PC-9 (cell line): ENCODE measurements at regions of chr20 and their contacts with region 1.

Region 1: GRCh38 chr20:53365539-53366075 is 228.0 kb downstream of the ZNF217 start:
- DNase-seq: no peak
- H3K4me3 ChIP-seq: no peak overlapping the region
- H3K27ac ChIP-seq: no peak overlapping the region
- H3K4me1 ChIP-seq: no peaks in the 10 kb centered on the region
- H3K27me3 ChIP-seq: peaks cover 97% of the 10 kb centered on the region
- CTCF ChIP-seq: no peak

Region 2: GRCh38 chr20:53138454-53139262 is 226.9 kb before region 1 on chr20:
- CTCF ChIA-PET with region 1: interaction called, 15 read pairs
- POLR2A ChIA-PET with region 1: no interaction called
- intact Hi-C with region 1: no loop called
- DNase-seq: no peak
- H3K4me3 ChIP-seq: no peak overlapping the region
- H3K27ac ChIP-seq: no peak overlapping the region
- H3K4me1 ChIP-seq: no peaks in the 10 kb centered on the region
- H3K27me3 ChIP-seq: peaks cover 52% of the 10 kb centered on the region
- CTCF ChIP-seq: no peak

Region 3: GRCh38 chr20:53413186-53413631 is 47.6 kb after region 1 on chr20:
- CTCF ChIA-PET with region 1: no interaction called
- POLR2A ChIA-PET with region 1: no interaction called
- intact Hi-C with region 1: no loop called
- DNase-seq: peak; percentile 52 to 63
- H3K4me3 ChIP-seq: no peak overlapping the region
- H3K27ac ChIP-seq: no peak overlapping the region
- H3K4me1 ChIP-seq: no peaks in the 10 kb centered on the region
- H3K27me3 ChIP-seq: peaks cover 45% of the 10 kb centered on the region
- CTCF ChIP-seq: peak; percentile 52

Region 4: DNA sequence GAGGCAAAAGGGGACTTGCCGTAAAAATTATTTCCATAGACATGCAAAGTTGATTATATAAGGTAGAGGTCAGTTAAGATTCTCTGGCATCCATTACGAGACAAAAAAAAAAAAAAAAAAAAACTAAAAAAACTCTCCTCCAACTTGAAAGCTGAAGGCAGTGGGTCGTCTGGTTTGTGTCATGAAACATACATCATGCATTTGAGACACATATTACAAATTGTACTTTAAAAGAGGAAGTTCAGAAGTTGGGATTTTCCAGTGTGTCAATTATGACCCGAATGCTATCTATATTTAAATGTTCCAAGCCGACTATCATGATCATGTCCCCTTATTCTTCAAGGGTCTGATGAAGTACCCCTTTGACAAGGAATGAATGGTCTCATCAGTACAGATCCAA is 103.0 kb after region 1 on chr20:
- CTCF ChIA-PET with region 1: interaction called, 10 read pairs
- POLR2A ChIA-PET with region 1: no interaction called
- intact Hi-C with region 1: no loop called
- DNase-seq: no peak
- H3K4me3 ChIP-seq: no peak overlapping the region
- H3K27ac ChIP-seq: no peak overlapping the region
- H3K4me1 ChIP-seq: no peaks in the 10 kb centered on the region
- H3K27me3 ChIP-seq: peaks cover 78% of the 10 kb centered on the region
- CTCF ChIP-seq: no peak